ENCODE measurements at regions of chr11 and their contacts with region 1.

Region 1: DNA sequence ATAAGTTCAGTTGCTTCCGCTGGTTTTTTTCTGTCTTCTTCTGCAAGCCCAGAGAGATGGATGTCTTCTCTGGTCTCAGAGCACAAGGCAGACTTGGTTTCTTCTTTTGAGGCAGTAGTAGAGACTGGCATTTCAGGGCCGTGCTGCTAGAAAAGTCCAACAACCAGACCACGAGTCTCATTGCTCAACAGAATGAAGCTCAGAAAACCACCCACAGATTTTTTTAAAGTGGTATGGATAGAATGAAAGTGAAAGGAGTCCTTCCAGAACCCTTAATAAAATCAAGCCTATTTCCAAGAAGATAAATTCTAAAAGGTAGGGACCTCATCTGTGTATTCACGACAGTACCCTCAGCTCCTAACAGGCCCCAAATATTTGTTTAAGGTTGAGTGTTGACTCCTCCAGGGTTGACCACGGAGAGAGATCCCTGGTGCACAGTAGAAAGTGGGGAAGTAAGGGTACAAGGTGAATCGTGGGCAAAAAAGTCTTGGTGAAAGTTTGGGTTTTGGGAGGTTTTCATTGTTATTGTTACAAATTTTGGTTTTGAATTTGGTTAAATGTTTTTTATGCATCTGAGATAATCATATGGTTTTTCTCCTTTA is 43.6 kb upstream of the DDX6 start:
- DNase-seq: no peak
- H3K4me3 Mint-ChIP-seq: no peak overlapping the region
- H3K27ac Mint-ChIP-seq: no peak overlapping the region
- H3K4me1 Mint-ChIP-seq: peaks cover 7% of the 10 kb centered on the region
- H3K27me3 Mint-ChIP-seq: no peaks in the 10 kb centered on the region
- CTCF ChIP-seq: no peak

Region 2: DNA sequence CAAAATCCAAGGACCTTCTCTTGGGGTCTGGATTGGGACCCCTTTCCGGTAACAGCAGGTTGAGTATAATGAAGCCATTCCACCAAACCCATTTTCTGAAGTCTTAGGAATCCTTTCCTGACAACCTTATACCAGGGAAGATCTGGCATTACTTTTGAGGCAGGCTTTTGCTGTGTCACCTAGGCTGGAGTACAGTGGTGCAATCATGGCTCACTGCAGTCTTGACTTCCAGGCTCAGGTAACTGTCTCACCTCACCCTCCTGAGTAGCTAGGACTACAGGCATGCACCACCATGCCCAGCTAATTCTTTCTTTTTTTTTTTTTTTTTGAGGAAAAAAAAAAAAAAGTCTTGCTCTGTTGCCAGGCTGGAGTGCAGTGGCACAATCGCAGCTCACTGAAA is 99.3 kb before region 1 on chr11:
- CTCF ChIA-PET with region 1: no interaction called
- POLR2A ChIA-PET with region 1: no interaction called
- intact Hi-C with region 1: no loop called
- DNase-seq: peak; percentile 32
- H3K4me3 Mint-ChIP-seq: no peak overlapping the region
- H3K27ac Mint-ChIP-seq: no peak overlapping the region
- H3K4me1 Mint-ChIP-seq: peaks cover 5% of the 10 kb centered on the region
- H3K27me3 Mint-ChIP-seq: no peaks in the 10 kb centered on the region
- CTCF ChIP-seq: no peak

Region 3: DNA sequence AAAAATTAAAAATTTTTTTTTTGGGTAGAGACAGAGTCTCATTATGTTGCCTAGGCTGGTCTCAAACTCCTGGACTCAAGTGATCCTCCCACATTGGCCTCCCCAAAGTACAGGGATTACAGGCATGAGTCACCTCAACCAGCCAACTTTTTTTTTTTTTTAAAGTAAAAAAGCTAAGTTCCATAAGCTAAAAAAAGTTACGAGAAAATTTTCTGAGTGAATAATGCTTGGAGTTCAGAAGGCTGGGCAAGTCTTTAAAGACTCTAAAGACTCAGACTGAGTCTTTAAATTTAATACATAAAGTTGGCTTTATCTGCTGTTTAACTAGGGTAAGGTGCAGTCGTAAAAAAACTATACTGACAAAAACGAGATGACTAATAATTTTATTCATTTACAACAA is 49.2 kb before region 1 on chr11:
- CTCF ChIA-PET with region 1: no interaction called
- POLR2A ChIA-PET with region 1: no interaction called
- intact Hi-C with region 1: no loop called
- DNase-seq: peak; percentile 51
- H3K4me3 Mint-ChIP-seq: no peak overlapping the region
- H3K27ac Mint-ChIP-seq: no peak overlapping the region
- H3K4me1 Mint-ChIP-seq: peaks cover 5% of the 10 kb centered on the region
- H3K27me3 Mint-ChIP-seq: no peaks in the 10 kb centered on the region
- CTCF ChIP-seq: no peak

Region 4: DNA sequence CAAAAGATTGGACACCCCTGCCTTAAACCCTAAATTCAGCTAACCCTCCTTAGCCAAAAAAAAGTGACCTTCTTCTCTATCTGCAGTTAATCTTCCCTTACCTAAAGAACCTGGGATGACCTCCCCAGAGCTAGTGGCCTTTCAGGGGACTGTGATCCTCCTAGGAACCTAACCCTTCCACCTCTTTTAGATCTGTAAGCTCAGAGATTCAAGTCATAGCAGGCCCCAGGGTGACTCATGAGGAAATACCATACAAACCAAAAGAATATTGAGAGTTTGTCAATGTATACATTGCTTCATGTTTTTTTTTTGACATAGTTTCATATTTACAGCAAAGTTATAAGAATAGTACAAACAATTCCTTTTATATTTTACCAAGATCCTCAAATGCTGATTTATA is 10.8 kb after region 1 on chr11:
- CTCF ChIA-PET with region 1: no interaction called
- POLR2A ChIA-PET with region 1: interaction called, 10 read pairs
- intact Hi-C with region 1: no loop called
- DNase-seq: peak; percentile 85
- H3K4me3 Mint-ChIP-seq: peak overlapping the region; percentile 15
- H3K27ac Mint-ChIP-seq: peak overlapping the region; percentile 79
- H3K4me1 Mint-ChIP-seq: peaks cover 25% of the 10 kb centered on the region
- H3K27me3 Mint-ChIP-seq: no peaks in the 10 kb centered on the region
- CTCF ChIP-seq: no peak

Region 5: GRCh38 chr11:118883368-118884071 is 49.0 kb after region 1 on chr11 and contains the start of gene CXCR5:
- CTCF ChIA-PET with region 1: no interaction called
- POLR2A ChIA-PET with region 1: no interaction called
- intact Hi-C with region 1: no loop called
- DNase-seq: no peak
- H3K4me3 Mint-ChIP-seq: no peak within 1 kb of the TSS
- H3K27ac Mint-ChIP-seq: no peak within 1 kb of the TSS
- H3K4me1 Mint-ChIP-seq: peaks cover 11% of the 10 kb centered on the region
- H3K27me3 Mint-ChIP-seq: peaks cover 11% of the 10 kb centered on the region
- CTCF ChIP-seq: no peak
- total RNA-seq, gene CXCR5: not detected in 2 replicates

Measured in MCF 10A (cell line).